ENCODE measurements at regions of chr10 and their contacts with region 1.

Region 1: DNA sequence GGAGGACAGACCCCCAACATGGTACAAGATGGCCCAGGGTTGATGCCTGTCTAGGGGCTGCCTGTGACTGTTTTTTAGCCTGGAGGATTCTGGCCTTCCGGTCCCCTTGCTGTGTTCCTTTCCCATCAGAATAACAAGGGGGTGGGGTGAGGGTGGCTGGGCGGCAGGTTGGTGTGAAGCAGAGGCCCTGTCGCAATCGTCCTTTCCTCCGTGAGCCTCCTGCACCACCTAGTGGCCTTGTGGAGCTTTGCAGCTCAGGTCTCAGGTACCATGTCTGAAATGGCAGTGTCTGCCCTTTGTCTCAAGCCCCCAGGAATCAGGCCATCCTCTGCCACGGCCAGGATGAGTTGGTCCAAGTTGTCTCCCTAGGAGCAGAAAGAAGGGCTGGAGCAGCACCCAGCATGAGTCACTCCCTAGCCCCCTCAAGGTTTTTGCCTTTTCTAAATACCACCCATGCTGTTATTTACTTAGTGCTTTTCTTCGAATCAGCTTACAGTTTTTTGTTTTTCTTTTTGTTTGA is 24.2 kb downstream of the TACR2 start:
- DNase-seq: peak; percentile 87
- H3K4me3 ChIP-seq: no peak overlapping the region; a peak in 1 of 4 replicates
- H3K27ac ChIP-seq: peak overlapping the region in 1 of 2 experiments; percentile 29; a peak in 1 of 4 replicates
- H3K4me1 ChIP-seq: peaks cover 8 to 11% of the 10 kb centered on the region in 2 experiments; a peak in 3 of 4 replicates
- H3K27me3 ChIP-seq: no peaks in the 10 kb centered on the region
- CTCF ChIP-seq: peak; percentile 94
- EP300 ChIP-seq: no peak
- RAD21 ChIP-seq: peak; percentile 98

Region 2: GRCh38 chr10:69232252-69232651 is 160.3 kb before region 1 on chr10:
- CTCF ChIA-PET with region 1: interaction called, 105 read pairs
- POLR2A ChIA-PET with region 1: no interaction called
- DNase-seq: no peak
- H3K4me3 ChIP-seq: no peak overlapping the region
- H3K27ac ChIP-seq: no peak overlapping the region
- H3K4me1 ChIP-seq: no peaks in the 10 kb centered on the region
- H3K27me3 ChIP-seq: no peaks in the 10 kb centered on the region
- CTCF ChIP-seq: no peak
- EP300 ChIP-seq: no peak
- RAD21 ChIP-seq: no peak

Region 3: GRCh38 chr10:69237528-69238159 is 154.9 kb before region 1 on chr10:
- CTCF ChIA-PET with region 1: interaction called, 105 read pairs
- POLR2A ChIA-PET with region 1: interaction called, 3 read pairs
- DNase-seq: peak; percentile 87
- H3K4me3 ChIP-seq: peak overlapping the region in 1 of 2 experiments; percentile 41; a peak in 1 of 4 replicates
- H3K27ac ChIP-seq: no peak overlapping the region
- H3K4me1 ChIP-seq: no peaks in the 10 kb centered on the region
- H3K27me3 ChIP-seq: no peaks in the 10 kb centered on the region
- CTCF ChIP-seq: peak; percentile 88
- EP300 ChIP-seq: no peak
- RAD21 ChIP-seq: peak; percentile 94

Region 4: GRCh38 chr10:69242852-69243212 is 149.7 kb before region 1 on chr10:
- CTCF ChIA-PET with region 1: interaction called, 105 read pairs
- POLR2A ChIA-PET with region 1: interaction called, 3 read pairs
- DNase-seq: no peak
- H3K4me3 ChIP-seq: no peak overlapping the region
- H3K27ac ChIP-seq: no peak overlapping the region
- H3K4me1 ChIP-seq: no peaks in the 10 kb centered on the region
- H3K27me3 ChIP-seq: no peaks in the 10 kb centered on the region
- CTCF ChIP-seq: no peak
- EP300 ChIP-seq: no peak
- RAD21 ChIP-seq: no peak

Region 5: DNA sequence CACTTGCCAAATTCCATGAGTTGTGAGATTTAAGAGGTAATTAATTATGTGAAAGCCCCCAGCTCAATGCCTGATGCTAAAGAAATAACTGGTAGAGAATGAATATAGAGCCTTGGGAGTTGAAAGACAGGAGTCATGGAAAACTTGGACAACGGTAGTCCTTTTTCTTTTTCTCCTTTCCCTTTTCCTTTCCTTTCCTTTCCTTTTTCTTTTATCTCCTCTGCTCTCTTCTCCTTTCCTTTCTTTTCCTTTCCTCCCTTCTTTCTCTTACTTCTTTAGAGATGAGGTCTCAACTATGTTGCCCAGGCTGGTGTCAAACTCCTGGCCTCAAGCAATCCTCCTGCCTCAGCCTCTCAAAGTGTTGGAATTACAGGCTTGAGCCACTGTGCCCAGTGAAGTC is 50.8 kb after region 1 on chr10:
- CTCF ChIA-PET with region 1: no interaction called
- POLR2A ChIA-PET with region 1: no interaction called
- DNase-seq: no peak
- H3K4me3 ChIP-seq: no peak overlapping the region
- H3K27ac ChIP-seq: no peak overlapping the region
- H3K4me1 ChIP-seq: peaks cover 10 to 29% of the 10 kb centered on the region in 2 experiments
- H3K27me3 ChIP-seq: no peaks in the 10 kb centered on the region
- CTCF ChIP-seq: no peak
- EP300 ChIP-seq: no peak
- RAD21 ChIP-seq: no peak